Spleen (tissue), 13 donors: ENCODE measurements at regions of chr2 and their contacts with region 1.

Region 1: GRCh38 chr2:36780231-36780839 is 83.8 kb downstream of the VIT start:
- DNase-seq: no peak
- H3K4me3 ChIP-seq: no peak overlapping the region
- H3K27ac ChIP-seq: no peak overlapping the region
- H3K4me1 ChIP-seq: peaks cover 0 to 21% (median 12%) of the 10 kb centered on the region in 6 donors
- H3K27me3 ChIP-seq: no peaks in the 10 kb centered on the region
- CTCF ChIP-seq: peak; percentile 65 to 87 (median 83)
- POLR2A ChIP-seq: no peak

Region 2: GRCh38 chr2:37000318-37000717 is 220.0 kb after region 1 on chr2:
- intact Hi-C with region 1: loop called (anchors 5 kb)
- DNase-seq: no peak
- H3K4me3 ChIP-seq: no peak overlapping the region
- H3K27ac ChIP-seq: no peak overlapping the region
- H3K4me1 ChIP-seq: peaks cover 0 to 9% (median 3%) of the 10 kb centered on the region in 6 donors
- H3K27me3 ChIP-seq: no peaks in the 10 kb centered on the region
- CTCF ChIP-seq: no peak
- POLR2A ChIP-seq: no peak